IMR-90 (cell line): ENCODE measurements at regions of chr7 and their contacts with region 1.

Region 1: GRCh38 chr7:139777948-139778841 is at the start of gene HIPK2:
- DNase-seq: peak; percentile 73
- ATAC-seq: peak; percentile 79
- H3K4me3 ChIP-seq: peak within 1 kb of the TSS; percentile 98
- H3K27ac ChIP-seq: peak within 1 kb of the TSS; percentile 99
- H3K4me1 ChIP-seq: peaks cover 16% of the 10 kb centered on the region
- H3K27me3 ChIP-seq: no peaks in the 10 kb centered on the region
- CTCF ChIP-seq: no peak
- POLR2A ChIP-seq: no peak; the same call in 1 of the 2 replicates
- RAD21 ChIP-seq: peak; percentile 24
- total RNA-seq, gene HIPK2: 21.7 and 22.0 TPM in 2 replicates

Region 2: GRCh38 chr7:139618482-139619366 is 159.5 kb before region 1 on chr7:
- CTCF ChIA-PET with region 1: no interaction called
- POLR2A ChIA-PET with region 1: no interaction called
- dilution Hi-C with region 1: no loop called
- in situ Hi-C with region 1: no loop called
- intact Hi-C with region 1: loop called (anchors 1 kb)
- DNase-seq: peak; percentile 41
- ATAC-seq: peak; percentile 54
- H3K4me3 ChIP-seq: no peak overlapping the region
- H3K27ac ChIP-seq: 0 out of 2 replicates have a peak overlapping the region, but pooled peaks have one; percentile 6
- H3K4me1 ChIP-seq: peaks cover 6% of the 10 kb centered on the region
- H3K27me3 ChIP-seq: no peaks in the 10 kb centered on the region
- CTCF ChIP-seq: peak; percentile 48
- POLR2A ChIP-seq: no peak
- RAD21 ChIP-seq: peak; percentile 64

Region 3: GRCh38 chr7:139823959-139824521 is 45.8 kb after region 1 on chr7:
- CTCF ChIA-PET with region 1: interaction called, 3 read pairs
- POLR2A ChIA-PET with region 1: interaction called, 3 read pairs
- dilution Hi-C with region 1: no loop called
- in situ Hi-C with region 1: no loop called
- intact Hi-C with region 1: loop called (anchors 1 kb)
- DNase-seq: peak; percentile 90
- ATAC-seq: peak; percentile 79
- H3K4me3 ChIP-seq: no peak overlapping the region
- H3K27ac ChIP-seq: peak overlapping the region; percentile 91
- H3K4me1 ChIP-seq: peaks cover 22% of the 10 kb centered on the region
- H3K27me3 ChIP-seq: peaks cover 9% of the 10 kb centered on the region; the same call in 1 of the 2 replicates
- CTCF ChIP-seq: no peak
- POLR2A ChIP-seq: no peak
- RAD21 ChIP-seq: no peak

Region 4: DNA sequence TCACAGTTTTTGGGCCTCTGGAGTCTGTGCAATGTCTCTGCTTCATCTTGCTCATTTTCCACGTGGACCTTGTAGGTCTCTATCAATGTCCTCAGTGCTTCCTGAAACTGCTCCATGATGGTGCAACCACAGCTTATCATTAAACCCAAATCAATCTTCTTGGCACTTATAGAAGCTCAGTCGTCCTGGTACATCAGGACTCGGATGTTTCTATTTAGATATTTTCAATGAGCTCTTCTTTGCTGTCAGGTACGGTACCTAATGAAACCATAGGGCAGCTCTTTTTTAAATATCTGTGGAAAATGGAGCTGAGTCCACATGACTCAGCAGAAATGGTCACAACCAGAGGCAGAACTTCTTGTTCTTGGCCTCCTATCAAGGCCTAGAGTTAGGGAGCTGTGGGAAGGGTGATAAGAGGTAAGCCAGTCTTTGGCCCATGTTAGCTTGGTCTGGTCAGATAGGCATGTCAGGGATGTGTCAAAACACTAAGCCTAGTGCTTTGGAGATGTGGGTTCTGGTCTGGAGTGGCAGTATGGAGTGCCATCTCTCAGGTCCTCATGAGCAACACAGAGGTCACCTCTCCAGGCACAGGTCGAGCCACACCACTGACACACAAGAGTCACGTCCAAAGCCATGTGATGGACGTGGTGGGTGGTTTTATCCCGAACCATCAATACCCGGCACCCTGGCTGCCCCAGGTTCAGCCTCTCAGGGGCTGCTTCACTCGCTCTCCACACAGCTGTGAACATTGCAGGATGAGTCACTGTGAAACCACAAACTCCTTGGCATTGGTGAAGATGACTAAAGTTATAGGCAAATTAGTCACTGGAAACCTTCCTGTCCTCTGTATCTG is 137.9 kb after region 1 on chr7:
- CTCF ChIA-PET with region 1: no interaction called
- POLR2A ChIA-PET with region 1: interaction called, 4 read pairs
- dilution Hi-C with region 1: no loop called
- in situ Hi-C with region 1: no loop called
- intact Hi-C with region 1: loop called (anchors 1 kb)
- DNase-seq: peak; percentile 99
- ATAC-seq: peak; percentile 68
- H3K4me3 ChIP-seq: no peak overlapping the region
- H3K27ac ChIP-seq: peak overlapping the region; percentile 83
- H3K4me1 ChIP-seq: peaks cover 28% of the 10 kb centered on the region
- H3K27me3 ChIP-seq: no peaks in the 10 kb centered on the region
- CTCF ChIP-seq: no peak
- POLR2A ChIP-seq: no peak
- RAD21 ChIP-seq: 0 out of 2 replicates have a peak, but pooled peaks have one; percentile 14

Region 5: DNA sequence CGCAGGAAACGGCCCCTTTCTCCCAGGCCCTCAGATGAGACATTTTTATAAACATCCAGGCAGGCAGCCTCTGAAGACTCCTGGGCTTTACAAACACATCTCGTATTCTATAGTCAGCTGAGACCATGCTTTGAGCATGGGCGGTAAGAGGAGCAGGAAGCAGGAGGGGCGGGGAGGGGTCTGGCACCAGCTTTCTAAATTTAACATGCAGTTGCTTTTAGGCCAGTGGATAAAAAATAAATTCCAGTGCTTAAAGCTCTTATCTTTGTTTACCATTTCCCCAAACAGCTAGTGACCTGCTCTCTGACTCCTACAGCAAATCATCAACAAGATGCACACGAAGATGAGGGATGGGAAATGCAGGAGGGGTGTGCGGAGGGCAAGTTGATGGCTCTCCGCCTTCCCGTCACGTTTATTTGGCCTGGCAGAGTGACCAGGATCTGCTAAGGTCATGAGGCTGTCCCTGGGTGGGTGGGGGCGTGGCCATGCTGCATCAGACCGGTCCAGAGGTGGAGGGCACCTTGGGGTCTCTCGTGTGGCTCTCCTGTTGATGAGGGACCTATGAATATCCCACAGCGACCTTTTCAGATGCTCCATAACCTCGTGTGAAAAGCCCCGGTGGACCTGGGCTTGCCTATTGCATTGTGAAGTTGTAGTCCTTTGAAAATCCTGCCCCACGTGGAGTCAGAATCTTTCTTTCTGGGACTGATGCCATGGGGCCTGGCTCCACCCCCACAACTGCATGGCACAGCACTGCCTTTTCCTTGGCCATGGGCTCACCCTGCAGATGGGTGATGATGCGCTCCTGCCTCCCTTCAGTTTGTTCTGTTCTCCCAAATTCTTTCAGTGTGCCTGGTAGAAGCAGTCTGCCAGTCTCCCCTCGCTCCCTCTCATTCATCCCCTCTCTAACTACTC is 217.1 kb after region 1 on chr7:
- CTCF ChIA-PET with region 1: no interaction called
- POLR2A ChIA-PET with region 1: no interaction called
- dilution Hi-C with region 1: no loop called
- in situ Hi-C with region 1: loop called (anchors 5 kb)
- intact Hi-C with region 1: loop called (anchors 1 kb)
- DNase-seq: peak; percentile 87
- ATAC-seq: peak; percentile 89
- H3K4me3 ChIP-seq: no peak overlapping the region
- H3K27ac ChIP-seq: peak overlapping the region; percentile 82
- H3K4me1 ChIP-seq: peaks cover 20% of the 10 kb centered on the region
- H3K27me3 ChIP-seq: no peaks in the 10 kb centered on the region
- CTCF ChIP-seq: no peak
- POLR2A ChIP-seq: no peak
- RAD21 ChIP-seq: peak; percentile 27; the same call in 1 of the 2 replicates

Region 6: DNA sequence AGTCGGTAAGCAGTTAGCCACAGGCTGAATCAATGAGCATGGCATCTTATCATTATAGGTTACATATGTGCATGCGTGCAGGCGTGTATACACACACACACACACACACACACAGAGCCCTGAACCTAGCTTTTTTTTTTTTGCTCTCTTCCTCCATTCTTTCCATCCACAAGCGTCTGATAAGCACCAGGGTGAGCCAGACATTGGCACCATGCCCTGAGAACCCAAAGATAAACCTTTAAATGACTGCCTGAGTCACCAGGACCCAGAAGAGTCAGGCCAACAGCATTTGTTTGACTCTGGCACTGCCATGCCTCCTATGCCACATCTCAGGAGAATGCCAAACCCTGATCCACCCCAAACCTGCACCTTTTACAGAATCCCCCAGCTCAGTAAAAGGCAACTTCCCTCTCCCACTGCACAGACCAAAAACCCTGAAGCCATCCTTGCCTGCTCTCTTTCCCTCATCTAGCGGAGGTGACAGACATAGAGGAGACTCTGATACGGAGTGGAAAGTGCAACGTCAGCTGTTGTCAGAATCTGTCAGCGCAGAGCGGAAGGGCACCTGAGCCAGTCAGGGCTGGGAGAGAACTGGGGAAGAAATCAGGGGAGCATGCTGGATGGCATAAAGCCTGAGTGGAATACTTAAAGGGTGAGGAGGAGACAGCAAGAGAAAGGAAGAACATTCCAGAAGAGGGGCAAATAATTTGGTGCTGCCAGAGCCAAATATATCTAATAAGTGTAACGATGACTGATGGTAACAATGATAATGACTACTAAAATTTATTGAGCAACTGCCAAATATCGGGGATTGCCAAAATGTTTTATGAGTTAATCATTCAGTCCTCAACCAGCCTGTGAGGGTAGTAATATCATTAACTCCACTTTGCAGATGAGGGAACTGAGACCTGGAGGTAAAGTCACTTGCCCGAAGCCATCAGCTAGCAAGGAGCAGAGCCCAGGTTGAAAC is 281.4 kb after region 1 on chr7:
- CTCF ChIA-PET with region 1: no interaction called
- POLR2A ChIA-PET with region 1: interaction called, 13 read pairs
- dilution Hi-C with region 1: no loop called
- in situ Hi-C with region 1: no loop called
- intact Hi-C with region 1: no loop called
- DNase-seq: peak; percentile 95
- ATAC-seq: peak; percentile 51
- H3K4me3 ChIP-seq: no peak overlapping the region
- H3K27ac ChIP-seq: no peak overlapping the region
- H3K4me1 ChIP-seq: peaks cover 21% of the 10 kb centered on the region
- H3K27me3 ChIP-seq: no peaks in the 10 kb centered on the region
- CTCF ChIP-seq: no peak
- POLR2A ChIP-seq: no peak
- RAD21 ChIP-seq: peak; percentile 8; the same call in 1 of the 2 replicates

Region 7: DNA sequence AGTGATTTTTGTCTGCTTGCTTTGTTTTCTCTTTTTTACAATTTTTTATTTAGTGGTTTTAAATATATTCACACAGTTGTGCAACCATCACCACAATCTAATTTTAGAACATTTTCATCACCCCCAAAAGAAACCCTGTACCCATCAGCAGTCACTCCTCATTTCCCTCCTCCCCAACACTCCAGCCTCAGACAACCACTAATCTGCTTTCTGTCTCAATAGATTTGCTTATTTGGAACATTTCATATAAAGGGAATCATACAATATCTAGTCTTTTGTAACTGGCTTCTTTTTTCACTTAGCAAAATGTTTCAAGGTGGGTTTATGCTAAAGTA is 532.4 kb after region 1 on chr7:
- CTCF ChIA-PET with region 1: no interaction called
- POLR2A ChIA-PET with region 1: no interaction called
- dilution Hi-C with region 1: no loop called
- in situ Hi-C with region 1: no loop called
- intact Hi-C with region 1: no loop called
- DNase-seq: no peak
- ATAC-seq: no peak
- H3K4me3 ChIP-seq: no peak overlapping the region
- H3K27ac ChIP-seq: no peak overlapping the region
- H3K4me1 ChIP-seq: peaks cover 7% of the 10 kb centered on the region
- H3K27me3 ChIP-seq: peaks cover 9% of the 10 kb centered on the region
- CTCF ChIP-seq: no peak
- POLR2A ChIP-seq: no peak
- RAD21 ChIP-seq: no peak

Region 8: DNA sequence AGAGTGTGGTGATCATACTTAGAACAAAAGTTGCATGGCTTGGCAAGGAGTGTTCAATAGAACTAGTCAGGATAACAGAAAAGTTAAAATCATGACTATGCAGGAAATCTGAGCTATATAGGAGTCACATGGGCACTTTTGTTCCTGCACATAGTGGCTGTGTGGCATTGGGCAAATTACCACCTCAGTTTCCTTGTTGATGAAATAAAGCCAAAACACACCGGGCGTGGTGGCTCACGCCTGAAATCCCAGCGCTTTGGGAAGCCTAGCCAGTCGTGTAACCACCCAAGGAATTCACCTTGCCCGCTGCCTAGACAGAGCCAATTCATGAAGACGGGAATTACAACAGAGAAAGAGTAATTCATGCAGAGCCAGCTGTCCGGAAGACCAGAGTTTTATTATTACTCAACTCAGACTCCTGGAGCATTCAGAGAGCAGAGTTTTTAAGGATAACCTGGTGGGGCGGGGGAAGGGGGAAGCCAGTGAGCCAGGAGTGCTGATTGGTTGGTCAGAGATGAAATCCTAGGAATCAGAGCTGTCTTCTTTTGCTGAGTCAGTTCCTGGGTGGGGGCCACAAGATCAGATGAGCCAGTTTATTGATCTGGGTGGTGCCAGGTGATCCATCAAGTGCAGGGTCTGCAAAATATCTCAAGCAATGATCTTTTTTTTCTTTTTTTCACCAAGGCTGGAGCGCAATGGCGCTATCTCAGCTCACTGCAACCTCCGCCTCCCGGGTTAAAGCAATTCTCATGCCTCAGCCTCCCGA is 707.5 kb after region 1 on chr7:
- CTCF ChIA-PET with region 1: no interaction called
- POLR2A ChIA-PET with region 1: no interaction called
- dilution Hi-C with region 1: no loop called
- in situ Hi-C with region 1: no loop called
- intact Hi-C with region 1: no loop called
- DNase-seq: no peak
- ATAC-seq: no peak
- H3K4me3 ChIP-seq: no peak overlapping the region
- H3K27ac ChIP-seq: no peak overlapping the region
- H3K4me1 ChIP-seq: no peaks in the 10 kb centered on the region
- H3K27me3 ChIP-seq: peaks cover 11% of the 10 kb centered on the region
- CTCF ChIP-seq: no peak
- POLR2A ChIP-seq: no peak
- RAD21 ChIP-seq: no peak